ENCODE measurements at regions of chr18 and their contacts with region 1.

Region 1: DNA sequence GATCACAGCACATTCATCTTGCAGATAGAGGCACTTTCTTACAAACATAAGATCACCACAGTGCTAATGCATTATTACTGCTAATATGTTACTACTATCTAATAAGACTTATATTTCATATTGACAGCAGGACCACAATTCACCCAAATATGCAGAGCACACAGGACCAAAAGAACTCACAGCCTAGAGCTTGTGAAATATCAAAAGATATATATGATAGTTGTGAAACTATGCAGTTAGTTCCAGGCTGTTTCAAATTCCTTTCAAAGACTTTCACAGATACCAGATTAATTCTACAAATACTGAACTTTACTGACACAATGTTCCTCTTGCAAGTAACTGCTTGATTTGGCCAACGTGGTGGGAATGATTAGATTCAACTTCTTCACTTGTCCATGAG is 23.0 kb downstream of the FBXO15 start:
- DNase-seq: no peak
- H3K4me3 ChIP-seq: no peak overlapping the region
- H3K27ac ChIP-seq: no peak overlapping the region
- H3K4me1 ChIP-seq: no peaks in the 10 kb centered on the region
- H3K27me3 ChIP-seq: no peaks in the 10 kb centered on the region
- CTCF ChIP-seq: no peak

Region 2: DNA sequence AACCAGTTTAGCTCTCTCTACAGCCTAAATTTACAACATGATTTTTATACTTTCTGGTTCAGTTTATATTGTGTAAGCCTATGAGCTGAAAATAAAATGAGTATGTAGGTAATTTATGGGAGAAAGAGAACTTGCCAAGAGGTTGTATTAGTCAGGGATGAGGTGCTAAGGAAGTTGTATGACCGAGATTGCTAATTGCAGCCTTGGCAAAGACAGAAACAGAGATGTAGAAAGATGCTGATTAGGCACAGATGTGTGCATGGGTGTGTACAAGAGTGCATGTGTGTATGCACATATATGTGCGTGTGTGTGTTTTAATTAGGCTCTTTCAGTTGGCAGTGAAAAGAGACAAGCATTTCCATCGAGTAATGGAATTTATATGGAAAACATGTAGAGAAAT is 191.0 kb before region 1 on chr18:
- intact Hi-C with region 1: no loop called
- DNase-seq: no peak
- H3K4me3 ChIP-seq: no peak overlapping the region
- H3K27ac ChIP-seq: no peak overlapping the region
- H3K4me1 ChIP-seq: no peaks in the 10 kb centered on the region
- H3K27me3 ChIP-seq: no peaks in the 10 kb centered on the region
- CTCF ChIP-seq: no peak

Region 3: DNA sequence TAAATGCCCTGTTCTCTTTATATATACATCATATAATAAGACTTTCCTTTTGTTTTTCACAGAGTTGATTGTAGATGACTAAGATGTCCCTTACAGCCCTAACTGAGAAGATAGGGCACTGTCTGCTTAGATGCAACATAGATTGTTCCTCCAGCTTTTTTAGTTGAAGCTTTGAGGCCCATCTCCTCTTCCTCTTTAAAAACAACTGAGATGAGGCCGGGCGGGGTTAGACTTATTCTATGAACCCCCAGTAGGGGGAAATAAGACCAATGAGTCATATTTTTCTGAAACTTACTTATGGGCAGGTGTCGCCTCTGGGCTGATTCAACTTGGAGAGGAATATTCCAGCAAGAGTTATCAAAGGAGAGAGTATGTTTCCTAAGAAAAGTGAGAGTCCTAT is 61.6 kb before region 1 on chr18:
- intact Hi-C with region 1: no loop called
- DNase-seq: no peak
- H3K4me3 ChIP-seq: no peak overlapping the region
- H3K27ac ChIP-seq: no peak overlapping the region
- H3K4me1 ChIP-seq: no peaks in the 10 kb centered on the region
- H3K27me3 ChIP-seq: no peaks in the 10 kb centered on the region
- CTCF ChIP-seq: no peak

Region 4: DNA sequence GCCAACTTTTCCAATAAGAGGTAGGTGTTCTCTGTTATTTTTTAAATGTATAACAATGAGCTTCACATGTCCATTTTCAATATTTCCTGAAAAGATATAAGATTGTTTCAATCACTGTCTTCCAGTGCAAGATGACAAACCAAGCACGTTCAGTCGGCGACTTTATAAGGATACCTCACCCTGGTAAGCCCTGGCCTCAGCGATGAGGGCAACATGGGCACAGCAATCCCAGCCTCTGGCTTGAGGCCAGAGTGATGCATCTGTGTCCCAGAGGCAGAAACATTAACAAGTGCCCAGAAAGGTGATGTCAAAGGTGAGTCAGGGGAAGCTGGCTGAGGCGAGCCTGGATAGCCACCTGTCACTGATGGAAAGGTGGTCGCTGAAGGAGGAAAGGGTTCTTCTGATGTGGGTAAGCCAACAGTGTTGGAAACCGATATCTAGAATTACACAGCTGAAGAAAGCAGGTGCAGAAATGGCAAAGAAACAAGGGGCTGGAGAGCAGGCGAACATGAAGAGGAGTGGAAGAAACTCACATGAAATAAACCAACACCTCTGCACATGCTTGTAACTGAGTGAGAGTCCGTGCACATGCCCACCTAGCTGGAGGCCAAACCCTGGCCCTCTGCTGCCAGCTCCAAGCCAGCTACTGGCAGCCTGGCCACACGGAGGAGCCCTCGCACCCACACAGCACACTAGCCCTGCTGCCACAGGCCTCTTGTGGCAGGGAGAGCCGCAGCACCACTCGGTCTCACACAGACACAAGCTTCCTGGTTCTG is 42.5 kb before region 1 on chr18:
- intact Hi-C with region 1: loop called (anchors 1 kb)
- DNase-seq: no peak
- H3K4me3 ChIP-seq: no peak overlapping the region
- H3K27ac ChIP-seq: peak overlapping the region; percentile 16 to 20
- H3K4me1 ChIP-seq: peaks cover 0 to 3% (median 0%) of the 10 kb centered on the region in 4 donors
- H3K27me3 ChIP-seq: no peaks in the 10 kb centered on the region
- CTCF ChIP-seq: peak; percentile 35 to 49

Region 5: GRCh38 chr18:74147779-74148542 is 23.3 kb after region 1 on chr18 and contains the starts of genes FBXO15 and TIMM21:
- intact Hi-C with region 1: no loop called
- DNase-seq: peak; percentile 97 to 98
- H3K4me3 ChIP-seq: peak within 1 kb of the TSS; percentile 72 to 74
- H3K27ac ChIP-seq: peak within 1 kb of the TSS; percentile 86 to 92
- H3K4me1 ChIP-seq: peaks cover 0 to 36% (median 27%) of the 10 kb centered on the region in 4 donors
- H3K27me3 ChIP-seq: no peaks in the 10 kb centered on the region
- CTCF ChIP-seq: peak in 1 of 2 experiments; percentile 5

Measured in tibial artery (tissue), 4 donors.